ENCODE measurements at regions of chr11 and their contacts with region 1.

Region 1: DNA sequence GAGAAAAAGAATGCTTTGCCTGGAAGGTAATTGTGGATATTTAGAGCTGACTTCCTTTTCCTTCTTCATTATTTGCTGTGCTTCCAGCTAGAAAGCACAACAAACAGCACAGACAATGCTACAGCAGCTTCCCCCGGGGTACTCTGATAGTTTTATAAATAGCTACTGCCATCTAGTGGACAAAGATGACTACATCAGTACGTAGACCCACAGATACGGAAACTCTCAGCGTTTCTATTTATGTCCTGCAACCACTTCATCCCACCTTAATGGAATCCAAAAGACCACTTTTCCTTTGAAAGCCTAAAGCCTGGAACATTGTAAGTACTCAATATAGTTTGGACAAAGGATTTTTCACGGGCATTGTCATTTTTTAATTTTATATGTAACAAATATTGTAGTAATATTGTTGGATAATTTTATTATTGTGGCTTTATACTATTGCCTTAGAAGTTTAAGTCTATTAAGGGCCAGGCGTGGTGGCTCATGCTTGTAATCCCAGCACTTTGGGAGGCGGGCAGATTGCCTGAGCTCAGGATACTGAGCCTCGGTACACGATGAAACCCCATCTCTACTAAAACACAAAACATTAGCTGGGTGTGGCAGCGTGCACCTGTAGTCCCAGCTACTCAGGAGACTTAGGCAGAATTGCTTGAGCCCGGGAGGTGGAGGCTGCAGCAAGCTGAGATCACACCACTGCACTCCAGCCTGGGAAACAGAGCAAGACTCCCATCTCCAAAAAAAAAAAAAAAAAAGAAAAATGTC is 7.5 kb downstream of the HSPA8 start:
- DNase-seq: no peak
- ATAC-seq: peak; percentile 72 to 89 (median 82)
- H3K4me3 ChIP-seq: no peak overlapping the region
- H3K27ac ChIP-seq: no peak overlapping the region
- H3K4me1 ChIP-seq: peaks cover 0 to 56% (median 48%) of the 10 kb centered on the region in 12 donors
- H3K27me3 ChIP-seq: no peaks in the 10 kb centered on the region
- CTCF ChIP-seq: peak; percentile 62 to 83 (median 72)
- POLR2A ChIP-seq: no peak

Region 2: DNA sequence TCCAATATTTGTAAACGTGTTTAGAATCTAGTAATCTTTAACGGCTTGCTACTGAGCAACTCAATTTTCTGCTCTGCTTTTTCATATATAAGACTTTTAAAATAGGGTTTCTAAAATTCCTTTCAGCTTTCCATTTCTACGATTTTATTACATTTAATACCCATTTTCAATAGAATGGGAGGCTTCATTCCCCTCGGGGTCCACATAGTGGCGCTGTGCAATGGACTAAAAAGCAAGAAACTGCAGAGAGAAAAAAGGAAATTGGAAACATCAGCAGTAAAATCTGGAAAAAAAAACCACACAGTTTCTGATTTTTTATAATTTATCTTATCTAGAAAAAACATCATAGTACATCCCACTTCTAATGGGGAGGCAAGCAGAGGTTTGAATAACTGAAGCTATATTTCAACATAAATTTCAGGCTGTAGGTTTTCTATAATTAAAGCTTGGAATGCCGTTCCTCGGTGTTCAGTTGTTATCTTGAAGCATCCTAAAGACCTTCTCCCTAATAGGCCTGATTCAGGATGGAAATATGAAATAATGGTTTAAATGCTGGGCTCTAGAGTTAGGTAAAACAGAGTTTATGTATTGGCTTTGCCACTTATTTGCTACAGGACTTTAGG is 190.7 kb before region 1 on chr11:
- intact Hi-C with region 1: loop called in 6 of 10 experiments (anchors 2 to 10 kb)
- DNase-seq: peak in 3 of 5 donors; percentile 18 to 36 (median 28)
- ATAC-seq: no peak
- H3K4me3 ChIP-seq: peak overlapping the region in 2 of 12 donors; percentile 6 to 21
- H3K27ac ChIP-seq: peak overlapping the region in 1 of 12 donors; percentile 57
- H3K4me1 ChIP-seq: peaks cover 0 to 7% (median 0%) of the 10 kb centered on the region in 12 donors
- H3K27me3 ChIP-seq: peaks cover 0 to 64% (median 13%) of the 10 kb centered on the region in 9 donors
- CTCF ChIP-seq: peak; percentile 61 to 89 (median 74)
- POLR2A ChIP-seq: no peak

Region 3: DNA sequence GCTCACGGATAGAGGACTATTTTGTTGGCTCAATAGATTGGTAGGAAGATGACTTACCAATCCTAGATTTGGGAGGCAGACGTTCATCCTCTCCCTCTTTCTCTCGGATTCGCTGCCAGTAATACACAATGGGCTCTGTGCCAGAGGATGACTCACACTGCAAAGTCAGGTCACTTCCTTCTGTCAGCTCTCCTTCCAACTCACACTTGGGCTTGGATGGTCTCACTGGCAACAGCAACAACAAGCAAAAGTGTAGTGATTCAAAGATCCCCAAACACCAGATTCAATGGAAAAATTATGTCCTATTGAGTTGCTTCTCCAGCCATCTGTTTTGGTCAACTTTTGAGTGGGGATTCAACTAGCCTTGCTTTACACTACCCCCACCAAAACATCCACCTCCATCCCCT is 29.1 kb after region 1 on chr11:
- intact Hi-C with region 1: no loop called
- DNase-seq: peak; percentile 69 to 93 (median 89)
- ATAC-seq: peak; percentile 63 to 91 (median 88)
- H3K4me3 ChIP-seq: no peak overlapping the region
- H3K27ac ChIP-seq: peak overlapping the region in 10 of 12 donors; percentile 12 to 68 (median 44)
- H3K4me1 ChIP-seq: peaks cover 0 to 34% (median 10%) of the 10 kb centered on the region in 12 donors
- H3K27me3 ChIP-seq: no peaks in the 10 kb centered on the region
- CTCF ChIP-seq: no peak
- POLR2A ChIP-seq: no peak

Measured in heart left ventricle (tissue), 16 donors.